ENCODE measurements at regions of chr13 and their contacts with region 1.

Region 1: GRCh38 chr13:37492741-37493514 is 105.6 kb downstream of the POSTN start:
- DNase-seq: peak; percentile 66
- H3K4me3 ChIP-seq: no peak overlapping the region
- H3K27ac ChIP-seq: no peak overlapping the region
- H3K4me1 ChIP-seq: peaks cover 28% of the 10 kb centered on the region
- H3K27me3 ChIP-seq: no peaks in the 10 kb centered on the region
- CTCF ChIP-seq: no peak

Region 2: GRCh38 chr13:37457612-37458011 is 35.3 kb before region 1 on chr13:
- CTCF ChIA-PET with region 1: no interaction called
- dilution Hi-C with region 1: no loop called
- in situ Hi-C with region 1: no loop called
- intact Hi-C with region 1: loop called (anchors 5 kb)
- DNase-seq: no peak
- H3K4me3 ChIP-seq: no peak overlapping the region
- H3K27ac ChIP-seq: no peak overlapping the region
- H3K4me1 ChIP-seq: no peaks in the 10 kb centered on the region
- H3K27me3 ChIP-seq: no peaks in the 10 kb centered on the region
- CTCF ChIP-seq: no peak

Measured in mammary epithelial cell (primary cell).